Adrenal gland (tissue), 19 donors: ENCODE measurements at regions of chr3 and their contacts with region 1.

Region 1: DNA sequence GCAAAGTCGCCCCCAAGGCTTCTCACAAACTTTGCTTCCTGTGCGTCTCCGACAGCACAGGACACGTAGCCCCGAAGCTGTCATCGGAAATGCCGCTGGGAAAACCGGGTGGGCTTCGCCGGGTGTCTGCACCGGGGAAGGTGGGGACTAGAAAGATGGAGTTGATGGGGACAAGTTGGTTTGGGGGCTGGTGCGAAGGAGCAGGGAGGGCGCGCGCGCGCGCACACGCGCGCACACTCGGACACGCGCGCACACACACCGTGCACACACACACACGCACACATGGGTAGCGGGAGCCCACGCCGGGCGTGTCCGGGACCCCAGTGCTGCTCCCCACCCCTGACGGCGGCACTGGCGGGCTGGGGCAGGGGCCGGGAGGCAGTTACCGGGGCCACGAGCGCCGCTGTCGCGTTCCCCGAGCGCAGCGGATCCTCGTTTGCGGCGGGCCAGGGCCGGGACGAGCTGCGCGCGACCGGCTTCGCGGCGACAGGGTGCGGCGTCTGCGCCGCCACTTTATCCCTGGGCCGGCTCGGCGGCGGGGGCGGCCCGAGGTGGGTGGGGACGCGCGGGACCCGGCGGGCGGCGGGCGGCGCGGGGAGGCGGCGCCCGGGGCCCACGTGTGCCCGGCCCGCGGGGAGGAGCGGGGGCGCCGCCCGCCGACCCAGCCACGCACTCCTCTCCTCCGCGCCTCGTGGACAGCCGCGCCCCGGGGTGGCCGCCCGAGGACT is 547 bp upstream of the MGLL start:
- DNase-seq: peak in 6 of 7 donors; percentile 48 to 64 (median 52)
- H3K4me3 ChIP-seq: peak overlapping the region; percentile 18 to 83 (median 70)
- H3K27ac ChIP-seq: peak overlapping the region in 4 of 5 donors; percentile 57 to 73 (median 62)
- H3K4me1 ChIP-seq: peaks cover 7 to 10% of the 10 kb centered on the region in 2 donors
- H3K27me3 ChIP-seq: no peaks in the 10 kb centered on the region
- CTCF ChIP-seq: peak in 2 of 6 experiments; percentile 17 to 48
- POLR2A ChIP-seq: peak in 1 of 2 donors; percentile 37

Region 2: GRCh38 chr3:127697551-127698240 is 125.2 kb before region 1 on chr3:
- intact Hi-C with region 1: loop called in 1 of 2 experiments (anchors 10 kb)
- DNase-seq: peak; percentile 68 to 92 (median 84)
- H3K4me3 ChIP-seq: no peak overlapping the region
- H3K27ac ChIP-seq: peak overlapping the region; percentile 31 to 93 (median 83)
- H3K4me1 ChIP-seq: peaks cover 50 to 59% of the 10 kb centered on the region in 2 donors
- H3K27me3 ChIP-seq: no peaks in the 10 kb centered on the region
- CTCF ChIP-seq: no peak
- POLR2A ChIP-seq: peak in 1 of 2 donors; percentile 6

Region 3: GRCh38 chr3:128153156-128154041 is 330.5 kb after region 1 on chr3 and contains the start of gene EEFSEC:
- intact Hi-C with region 1: no loop called
- DNase-seq: peak; percentile 79 to 85 (median 82)
- H3K4me3 ChIP-seq: peak within 1 kb of the TSS; percentile 42 to 96 (median 83)
- H3K27ac ChIP-seq: peak within 1 kb of the TSS in 4 of 5 donors; percentile 81 to 94 (median 92)
- H3K4me1 ChIP-seq: peaks cover 7 to 10% of the 10 kb centered on the region in 2 donors
- H3K27me3 ChIP-seq: no peaks in the 10 kb centered on the region
- CTCF ChIP-seq: peak in 1 of 6 experiments; percentile 20
- POLR2A ChIP-seq: peak in 1 of 2 donors; percentile 68
- total RNA-seq, gene EEFSEC: 5.5 to 15.6 (median 11.3) TPM